CD14-positive monocyte (primary cell): ENCODE measurements at regions of chr12 and their contacts with region 1.

Region 1: DNA sequence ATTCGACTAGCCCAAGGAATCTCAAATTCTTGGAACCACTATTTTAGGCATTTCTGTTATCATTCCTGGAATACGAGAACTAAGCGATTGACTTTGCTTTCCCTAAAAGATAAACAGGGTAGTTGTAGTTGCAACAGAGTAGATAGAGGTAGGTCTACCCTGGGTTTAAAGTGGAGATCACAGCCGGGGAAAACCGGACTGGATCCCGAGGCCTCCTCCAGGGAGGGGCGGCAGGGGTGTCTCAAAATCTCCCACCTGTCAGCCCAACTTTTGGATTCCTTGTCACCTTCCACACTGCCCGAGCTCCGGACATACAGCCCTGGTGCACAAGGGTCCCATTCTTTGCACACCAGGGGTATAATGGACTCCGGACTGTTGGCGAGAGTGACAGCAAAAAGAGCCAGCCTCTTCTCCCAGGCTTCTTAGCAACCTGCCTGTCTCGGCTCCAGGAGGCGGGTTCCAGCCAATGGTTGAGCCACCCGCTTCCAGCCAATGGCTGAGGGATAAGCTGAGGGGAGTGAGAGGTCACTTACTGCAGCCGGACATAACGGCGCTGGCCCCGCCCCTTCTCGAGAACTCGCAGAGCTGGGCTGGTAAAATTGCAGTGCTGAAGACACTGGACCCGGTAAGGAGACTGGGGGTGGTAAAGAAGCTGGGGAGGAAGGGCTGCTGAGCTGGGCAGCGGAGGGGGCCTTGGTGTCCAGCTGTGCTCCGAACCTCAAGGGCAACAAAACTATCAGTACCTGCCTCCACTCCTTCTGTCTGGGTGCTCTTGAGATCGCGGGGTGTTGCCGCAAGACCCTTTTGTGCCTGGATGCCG is at the start of gene SUOX:
- DNase-seq: peak; percentile 90 to 94 (median 90)
- H3K4me3 ChIP-seq: peak within 1 kb of the TSS; percentile 51 to 98 (median 90)
- H3K4me3 Mint-ChIP-seq: peak within 1 kb of the TSS; percentile 88 to 98
- H3K27ac ChIP-seq: peak within 1 kb of the TSS; percentile 50 to 84
- H3K27ac Mint-ChIP-seq: peak within 1 kb of the TSS; percentile 88 to 97 (median 91)
- H3K4me1 ChIP-seq: peaks cover 14 to 19% of the 10 kb centered on the region in 2 donors
- H3K4me1 Mint-ChIP-seq: peaks cover 25% of the 10 kb centered on the region
- H3K27me3 ChIP-seq: no peaks in the 10 kb centered on the region
- H3K27me3 Mint-ChIP-seq: no peaks in the 10 kb centered on the region
- CTCF ChIP-seq: no peak
- polyA plus RNA-seq, gene SUOX: 9.7 to 17.1 (median 14.4) TPM

Region 2: GRCh38 chr12:55926738-55927587 is 70.0 kb before region 1 on chr12:
- intact Hi-C with region 1: no loop called
- DNase-seq: peak; percentile 86 to 89 (median 88)
- H3K4me3 ChIP-seq: peak overlapping the region; percentile 65 to 93 (median 91)
- H3K4me3 Mint-ChIP-seq: peak overlapping the region; percentile 96 to 98
- H3K27ac ChIP-seq: peak overlapping the region; percentile 85 to 92
- H3K27ac Mint-ChIP-seq: peak overlapping the region; percentile 95 to 99 (median 97)
- H3K4me1 ChIP-seq: peaks cover 46 to 51% of the 10 kb centered on the region in 2 donors
- H3K4me1 Mint-ChIP-seq: peaks cover 53% of the 10 kb centered on the region
- H3K27me3 ChIP-seq: no peaks in the 10 kb centered on the region
- H3K27me3 Mint-ChIP-seq: peaks cover 0 to 3% (median 1%) of the 10 kb centered on the region in 3 donors
- CTCF ChIP-seq: peak; percentile 78

Region 3: DNA sequence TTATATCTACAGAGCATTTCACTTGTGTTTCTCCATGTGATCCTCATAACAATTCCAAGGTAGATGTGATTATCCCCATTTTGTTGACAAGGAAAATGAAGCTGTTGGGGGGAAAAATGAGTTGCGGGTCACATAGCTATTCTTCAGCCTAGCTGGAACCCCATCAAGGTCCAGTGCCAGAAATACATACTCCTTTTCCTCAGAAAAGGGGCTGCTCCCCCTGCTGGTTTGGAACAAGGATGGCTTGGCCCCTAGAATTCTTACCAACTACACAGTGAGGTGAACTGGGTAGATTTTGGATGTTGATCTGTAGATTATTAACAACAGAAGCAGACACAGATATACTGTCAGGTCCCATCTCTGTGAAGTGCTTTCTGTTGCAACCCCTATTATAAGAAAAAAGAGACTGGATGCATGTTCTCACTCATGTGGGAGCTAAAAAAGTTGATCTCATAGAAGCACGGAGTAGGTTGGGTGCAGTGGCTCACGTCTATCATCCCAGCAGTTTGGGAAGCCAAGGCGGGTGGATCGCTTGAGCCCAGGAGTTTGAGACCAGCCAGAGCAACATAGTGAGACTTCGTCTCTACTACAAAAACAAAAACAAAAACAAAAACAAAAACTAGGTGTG is 32.9 kb after region 1 on chr12:
- intact Hi-C with region 1: loop called in 1 of 2 experiments (anchors 2 kb)
- DNase-seq: peak; percentile 26 to 44 (median 42)
- H3K4me3 ChIP-seq: no peak overlapping the region
- H3K4me3 Mint-ChIP-seq: no peak overlapping the region
- H3K27ac ChIP-seq: no peak overlapping the region
- H3K27ac Mint-ChIP-seq: no peak overlapping the region
- H3K4me1 ChIP-seq: no peaks in the 10 kb centered on the region
- H3K4me1 Mint-ChIP-seq: no peaks in the 10 kb centered on the region
- H3K27me3 ChIP-seq: no peaks in the 10 kb centered on the region
- H3K27me3 Mint-ChIP-seq: peaks cover 0 to 6% (median 0%) of the 10 kb centered on the region in 3 donors
- CTCF ChIP-seq: peak; percentile 70

Region 4: GRCh38 chr12:56104109-56104814 is 107.3 kb after region 1 on chr12 and contains the start of gene PA2G4:
- intact Hi-C with region 1: loop called in 1 of 2 experiments (anchors 10 kb)
- DNase-seq: peak; percentile 92 to 96 (median 95)
- H3K4me3 ChIP-seq: peak within 1 kb of the TSS; percentile 69 to 85 (median 83)
- H3K4me3 Mint-ChIP-seq: peak within 1 kb of the TSS; percentile 99
- H3K27ac ChIP-seq: peak within 1 kb of the TSS; percentile 43 to 77
- H3K27ac Mint-ChIP-seq: peak within 1 kb of the TSS; percentile 78 to 96 (median 93)
- H3K4me1 ChIP-seq: peaks cover 19 to 23% of the 10 kb centered on the region in 2 donors
- H3K4me1 Mint-ChIP-seq: peaks cover 23% of the 10 kb centered on the region
- H3K27me3 ChIP-seq: no peaks in the 10 kb centered on the region
- H3K27me3 Mint-ChIP-seq: peaks cover 0 to 5% (median 2%) of the 10 kb centered on the region in 3 donors
- CTCF ChIP-seq: no peak
- polyA plus RNA-seq, gene PA2G4: 83.0 to 84.2 (median 83.0) TPM

Region 5: GRCh38 chr12:56206457-56207166 is 209.7 kb after region 1 on chr12:
- intact Hi-C with region 1: no loop called
- DNase-seq: peak; percentile 35 to 45 (median 42)
- H3K4me3 ChIP-seq: no peak overlapping the region
- H3K4me3 Mint-ChIP-seq: no peak overlapping the region
- H3K27ac ChIP-seq: peak overlapping the region in 1 of 2 donors; percentile 32
- H3K27ac Mint-ChIP-seq: peak overlapping the region in 5 of 7 donors; percentile 22 to 61 (median 44)
- H3K4me1 ChIP-seq: no peaks in the 10 kb centered on the region
- H3K4me1 Mint-ChIP-seq: peaks cover 2% of the 10 kb centered on the region
- H3K27me3 ChIP-seq: no peaks in the 10 kb centered on the region
- H3K27me3 Mint-ChIP-seq: no peaks in the 10 kb centered on the region
- CTCF ChIP-seq: peak; percentile 52